ENCODE measurements at regions of chr15 and their contacts with region 1.

Region 1: DNA sequence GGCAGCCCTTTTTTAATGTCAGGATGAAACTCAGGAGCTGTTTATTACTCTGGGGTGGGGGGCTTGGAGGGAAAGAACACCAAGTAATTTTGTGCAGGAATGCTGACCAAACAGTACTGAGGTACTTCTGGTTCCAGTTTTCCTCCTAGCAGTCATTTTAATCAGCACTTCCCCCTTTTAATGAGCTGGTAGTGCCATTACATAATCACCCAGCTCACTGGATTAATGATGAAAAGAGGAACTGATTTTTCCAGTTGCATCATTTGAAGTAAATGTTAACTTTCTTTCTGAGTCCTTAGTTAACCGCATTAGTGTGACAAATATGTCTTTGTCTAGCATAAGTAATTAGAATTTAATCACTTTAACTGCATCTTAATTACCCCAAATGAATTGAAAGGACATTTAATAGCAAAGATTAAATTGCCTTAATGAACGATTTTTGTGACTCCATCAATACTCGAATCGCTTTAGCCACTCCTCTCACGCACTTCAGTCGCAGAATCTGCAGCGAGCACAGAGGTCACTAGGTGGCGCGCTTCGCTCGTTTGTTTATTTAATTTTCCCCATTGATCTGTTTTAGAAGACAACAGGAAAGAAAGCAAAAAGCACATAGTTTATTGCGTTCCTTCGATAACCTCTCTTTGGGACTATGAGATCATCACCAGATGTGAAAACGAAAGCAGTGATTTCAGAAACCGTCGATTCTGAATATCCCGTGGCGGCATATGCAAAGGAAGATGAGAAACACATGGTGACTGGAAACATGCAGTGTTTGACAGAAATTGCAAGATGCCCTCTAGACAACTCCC is 9.8 kb downstream of the ONECUT1 start:
- DNase-seq: peak in 1 of 2 donors; percentile 74
- ATAC-seq: peak; percentile 70

Region 2: GRCh38 chr15:52709190-52709981 is 71.0 kb before region 1 on chr15:
- intact Hi-C with region 1: no loop called
- DNase-seq: peak; percentile 78 to 85
- ATAC-seq: peak; percentile 100

Region 3: GRCh38 chr15:53197426-53197839 is 417.1 kb after region 1 on chr15:
- intact Hi-C with region 1: loop called in 1 of 2 experiments (anchors 5 kb)
- DNase-seq: peak; percentile 29 to 58
- ATAC-seq: peak; percentile 84